PC-9 (cell line): ENCODE measurements at regions of chr1 and their contacts with region 1.

Region 1: GRCh38 chr1:201748335-201748734 is 80.6 kb upstream of the IPO9 start:
- DNase-seq: peak; percentile 54 to 77
- H3K4me3 ChIP-seq: no peak overlapping the region
- H3K27ac ChIP-seq: peak overlapping the region; percentile 63
- H3K4me1 ChIP-seq: peaks cover 56% of the 10 kb centered on the region
- H3K27me3 ChIP-seq: no peaks in the 10 kb centered on the region
- CTCF ChIP-seq: no peak

Region 2: DNA sequence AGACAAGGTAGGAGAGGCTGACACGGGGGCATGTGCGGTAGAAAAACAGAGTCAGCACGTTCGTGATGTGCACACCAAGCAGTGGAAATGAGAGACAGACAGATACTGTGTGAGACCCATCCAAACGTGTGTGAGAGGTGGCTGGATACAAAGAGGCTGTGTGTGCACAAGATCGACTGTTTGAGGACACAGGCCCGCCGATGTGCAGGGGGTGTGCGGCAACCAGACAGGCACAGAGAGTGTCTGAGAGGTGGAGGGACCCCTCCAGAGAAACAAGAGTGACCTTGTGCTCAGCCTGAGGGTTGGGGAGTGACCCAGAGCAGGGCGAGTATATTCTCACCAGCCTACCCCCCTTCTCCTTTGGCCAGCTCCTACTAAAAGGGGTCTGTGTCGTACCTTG is 17.2 kb before region 1 on chr1:
- CTCF ChIA-PET with region 1: no interaction called
- POLR2A ChIA-PET with region 1: no interaction called
- intact Hi-C with region 1: no loop called
- DNase-seq: no peak
- H3K4me3 ChIP-seq: no peak overlapping the region
- H3K27ac ChIP-seq: no peak overlapping the region
- H3K4me1 ChIP-seq: no peaks in the 10 kb centered on the region
- H3K27me3 ChIP-seq: no peaks in the 10 kb centered on the region
- CTCF ChIP-seq: no peak

Region 3: DNA sequence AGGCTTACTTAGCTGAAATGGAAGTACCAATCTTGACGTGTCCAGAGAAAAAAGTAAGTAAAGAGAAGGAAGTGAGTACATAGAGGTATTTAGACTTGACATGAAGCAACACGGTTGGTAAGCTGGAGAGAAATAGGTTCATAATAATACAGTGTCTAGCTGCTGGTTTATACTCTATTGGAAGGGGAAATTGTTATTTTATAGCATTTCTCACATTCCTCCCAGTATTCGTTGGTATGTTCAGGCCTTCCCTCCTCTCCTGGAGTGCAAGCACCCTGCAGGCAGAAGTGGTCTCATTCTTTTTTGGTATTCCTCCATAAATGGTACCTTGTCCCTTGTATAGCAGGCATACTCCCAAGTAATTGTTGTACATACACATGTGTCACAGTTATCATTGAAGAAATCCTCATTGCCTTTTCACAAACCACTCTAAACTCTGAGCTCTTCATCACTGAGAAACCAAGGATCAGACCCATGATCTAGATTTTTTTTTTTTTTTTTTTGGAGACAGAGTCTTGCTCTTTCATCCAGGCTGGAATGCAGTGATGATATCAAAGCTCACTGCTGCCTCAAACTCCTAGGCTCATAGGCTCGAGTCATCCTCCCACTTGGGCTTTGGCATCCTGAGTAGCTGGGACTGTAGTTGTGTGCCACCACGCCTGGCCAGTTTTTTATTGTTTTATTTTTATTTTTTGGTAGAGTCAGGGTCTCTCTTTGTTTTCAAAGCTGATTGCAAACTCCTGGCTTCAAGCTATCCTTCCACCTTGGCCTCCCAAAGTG is 70.8 kb after region 1 on chr1:
- CTCF ChIA-PET with region 1: no interaction called
- POLR2A ChIA-PET with region 1: interaction called, 12 read pairs
- intact Hi-C with region 1: no loop called
- DNase-seq: no peak
- H3K4me3 ChIP-seq: no peak overlapping the region
- H3K27ac ChIP-seq: no peak overlapping the region
- H3K4me1 ChIP-seq: no peaks in the 10 kb centered on the region
- H3K27me3 ChIP-seq: no peaks in the 10 kb centered on the region
- CTCF ChIP-seq: no peak